ENCODE measurements at regions of chr2 and their contacts with region 1.

Region 1: DNA sequence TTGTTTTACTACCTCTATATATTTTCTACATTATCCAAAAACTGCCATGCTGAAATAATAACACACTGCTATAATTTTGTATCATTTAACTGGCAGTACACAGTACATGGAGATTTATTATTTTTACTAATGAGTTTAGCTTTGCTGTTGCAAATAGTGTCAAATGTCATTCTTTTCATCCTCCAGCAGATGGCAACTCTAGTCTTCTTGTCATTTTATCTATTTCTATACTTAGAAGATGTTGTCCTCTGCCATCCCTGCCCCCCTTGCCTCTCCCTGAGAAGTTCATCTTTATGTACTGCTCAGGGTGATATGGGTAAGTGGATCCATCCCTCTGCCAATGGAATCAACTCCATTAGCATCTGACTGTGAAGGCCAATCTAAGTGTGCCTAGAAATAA is 21.7 kb upstream of the LRRTM1 start:
- DNase-seq: peak in 1 of 2 donors; percentile 17
- ATAC-seq: peak in 5 of 8 donors; percentile 38 to 70 (median 62)
- H3K4me3 ChIP-seq: no peak overlapping the region
- H3K27ac ChIP-seq: no peak overlapping the region
- H3K4me1 ChIP-seq: peaks cover 0 to 9% (median 0%) of the 10 kb centered on the region in 9 donors
- H3K27me3 ChIP-seq: peaks cover 0 to 32% (median 22%) of the 10 kb centered on the region in 7 donors
- CTCF ChIP-seq: peak in 8 of 9 donors; percentile 37 to 75 (median 61)

Region 2: DNA sequence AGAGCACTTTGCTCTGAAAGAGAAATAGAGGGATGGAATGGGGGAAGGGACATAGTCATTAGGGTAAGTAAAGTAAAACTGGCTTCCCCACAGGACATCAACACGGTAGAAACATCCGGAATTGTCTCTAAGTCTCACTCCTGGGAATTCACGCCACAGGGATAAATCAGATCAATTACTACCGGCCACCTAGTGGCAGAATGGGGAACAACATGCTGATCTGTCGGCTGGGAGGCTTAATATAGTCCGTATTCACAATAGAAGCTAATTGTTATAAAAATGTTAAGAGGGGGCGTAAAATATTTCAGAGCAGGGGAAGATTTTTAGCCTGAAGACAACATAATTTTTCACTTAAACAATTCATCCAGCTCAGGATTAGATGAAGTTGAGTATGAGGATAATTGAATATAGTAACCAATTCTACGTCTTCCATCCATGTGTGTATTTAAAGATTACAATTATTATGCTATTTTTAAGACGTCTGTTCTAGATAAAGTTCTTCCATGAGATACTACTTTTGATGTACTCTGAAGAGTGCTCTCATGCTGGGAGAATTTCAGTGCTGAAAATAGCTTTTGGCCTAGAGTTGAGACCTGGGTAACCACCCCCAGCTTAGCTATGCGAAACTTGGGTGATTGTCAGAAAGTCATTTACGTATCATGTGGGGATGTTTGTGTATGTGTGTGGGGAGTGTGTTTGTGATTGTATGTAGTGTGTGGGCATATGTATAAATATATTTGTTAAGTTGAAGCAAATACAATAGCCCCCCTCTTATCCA is 87.3 kb before region 1 on chr2:
- intact Hi-C with region 1: no loop called
- DNase-seq: peak in 1 of 2 donors; percentile 26
- ATAC-seq: peak; percentile 44 to 79 (median 62)
- H3K4me3 ChIP-seq: no peak overlapping the region
- H3K27ac ChIP-seq: peak overlapping the region in 1 of 10 donors; percentile 57
- H3K4me1 ChIP-seq: peaks cover 0 to 24% (median 0%) of the 10 kb centered on the region in 9 donors
- H3K27me3 ChIP-seq: no peaks in the 10 kb centered on the region
- CTCF ChIP-seq: peak; percentile 51 to 73 (median 65)

Region 3: GRCh38 chr2:80288576-80288975 is 37.6 kb before region 1 on chr2:
- intact Hi-C with region 1: no loop called
- DNase-seq: peak in 1 of 2 donors; percentile 14
- ATAC-seq: peak in 6 of 8 donors; percentile 53 to 85 (median 72)
- H3K4me3 ChIP-seq: no peak overlapping the region
- H3K27ac ChIP-seq: no peak overlapping the region
- H3K4me1 ChIP-seq: peaks cover 0 to 10% (median 0%) of the 10 kb centered on the region in 9 donors
- H3K27me3 ChIP-seq: no peaks in the 10 kb centered on the region
- CTCF ChIP-seq: peak in 8 of 9 donors; percentile 8 to 66 (median 44)

Region 4: GRCh38 chr2:80429251-80429650 is 103.0 kb after region 1 on chr2:
- intact Hi-C with region 1: loop called in 1 of 10 experiments (anchors 10 kb)
- DNase-seq: no peak
- ATAC-seq: no peak
- H3K4me3 ChIP-seq: no peak overlapping the region
- H3K27ac ChIP-seq: no peak overlapping the region
- H3K4me1 ChIP-seq: peaks cover 0 to 11% (median 0%) of the 10 kb centered on the region in 9 donors
- H3K27me3 ChIP-seq: peaks cover 0 to 8% (median 0%) of the 10 kb centered on the region in 7 donors
- CTCF ChIP-seq: peak in 1 of 9 donors; percentile 19

Region 5: GRCh38 chr2:80643598-80643997 is 317.4 kb after region 1 on chr2:
- intact Hi-C with region 1: no loop called
- DNase-seq: no peak
- ATAC-seq: no peak
- H3K4me3 ChIP-seq: no peak overlapping the region
- H3K27ac ChIP-seq: no peak overlapping the region
- H3K4me1 ChIP-seq: no peaks in the 10 kb centered on the region
- H3K27me3 ChIP-seq: no peaks in the 10 kb centered on the region
- CTCF ChIP-seq: no peak